SK-N-SH (cell line): ENCODE measurements at regions of chr5 and their contacts with region 1.

Region 1: DNA sequence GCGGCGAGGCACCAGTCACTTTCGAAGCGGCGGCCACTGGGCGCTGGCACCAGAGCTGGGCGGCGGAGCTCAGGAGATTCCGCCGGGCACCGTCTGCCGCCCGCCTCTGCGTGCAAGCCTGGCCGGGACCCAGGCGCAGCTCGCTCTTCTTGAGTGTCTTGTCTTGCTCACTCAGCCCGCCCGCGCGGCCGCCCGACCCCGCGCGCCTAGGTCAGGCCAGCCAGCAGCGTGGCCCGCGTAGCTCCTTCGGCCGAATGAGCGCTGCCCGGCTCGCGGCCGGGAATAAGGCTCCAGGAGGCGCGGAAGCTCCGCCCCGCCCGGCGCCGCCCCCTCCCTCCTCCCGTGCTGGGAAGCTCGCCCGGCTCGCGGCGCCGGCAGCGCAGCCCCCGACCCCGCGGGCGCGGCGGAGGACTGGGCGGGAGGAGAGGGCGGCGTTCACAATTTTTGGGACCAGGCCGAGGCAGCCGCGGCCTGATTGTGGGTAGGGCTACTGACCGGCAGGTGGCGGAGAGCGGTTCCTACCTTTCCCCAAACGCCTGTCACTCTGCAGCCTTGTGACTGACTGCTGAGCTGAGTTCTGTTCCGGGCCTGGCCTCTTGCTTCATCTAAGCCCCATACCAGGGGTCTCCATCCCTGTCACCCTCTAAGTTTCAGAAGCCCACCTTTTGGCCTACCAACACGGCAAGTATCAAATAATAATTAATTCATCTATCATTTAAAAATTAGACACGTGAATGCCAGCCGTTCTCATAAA is at the start of gene HBEGF:
- DNase-seq: peak; percentile 96
- H3K4me3 ChIP-seq: peak within 1 kb of the TSS; percentile 72 to 86
- H3K27ac ChIP-seq: peak within 1 kb of the TSS; percentile 55 to 75; a peak in 3 of 4 replicates
- H3K4me1 ChIP-seq: peaks cover 12 to 32% of the 10 kb centered on the region in 2 experiments
- H3K27me3 ChIP-seq: no peaks in the 10 kb centered on the region
- CTCF ChIP-seq: peak; percentile 43
- EP300 ChIP-seq: no peak
- RAD21 ChIP-seq: no peak
- polyA plus RNA-seq, gene HBEGF: 56.2 and 59.8 TPM in 2 replicates

Region 2: GRCh38 chr5:139848508-139849100 is 497.9 kb before region 1 on chr5:
- CTCF ChIA-PET with region 1: no interaction called
- POLR2A ChIA-PET with region 1: no interaction called
- DNase-seq: no peak
- H3K4me3 ChIP-seq: peak overlapping the region in 1 of 2 experiments; percentile 45; a peak in 2 of 4 replicates
- H3K27ac ChIP-seq: no peak overlapping the region
- H3K4me1 ChIP-seq: peaks cover 0 to 5% of the 10 kb centered on the region in 2 experiments; a peak in 1 of 4 replicates
- H3K27me3 ChIP-seq: no peaks in the 10 kb centered on the region
- CTCF ChIP-seq: no peak
- EP300 ChIP-seq: no peak
- RAD21 ChIP-seq: no peak

Region 3: DNA sequence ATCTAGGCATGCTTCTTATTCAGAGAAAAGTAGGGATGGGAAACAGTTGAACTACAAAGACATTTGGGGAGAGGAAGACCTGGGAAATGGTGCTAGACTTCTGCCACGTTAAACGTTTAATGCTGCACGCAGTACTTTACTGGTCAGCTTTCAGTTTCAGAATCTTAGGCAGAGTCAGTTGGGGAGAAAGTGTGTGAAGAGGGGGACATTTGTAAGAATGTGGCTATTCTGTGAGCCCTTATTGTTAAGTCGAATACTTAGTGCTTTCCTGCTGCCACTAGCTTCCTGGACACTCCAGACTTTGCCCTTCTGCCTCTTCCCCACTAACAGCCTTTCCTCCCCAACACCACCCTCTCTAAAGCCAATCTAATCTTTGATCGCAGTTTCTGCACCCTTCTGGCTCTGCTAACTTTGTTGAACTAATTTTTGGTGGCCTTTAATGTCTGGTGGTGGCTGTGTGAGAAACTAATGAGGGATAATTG is 165.5 kb before region 1 on chr5:
- CTCF ChIA-PET with region 1: interaction called, 12 read pairs
- POLR2A ChIA-PET with region 1: no interaction called
- DNase-seq: peak; percentile 39
- H3K4me3 ChIP-seq: no peak overlapping the region
- H3K27ac ChIP-seq: peak overlapping the region in 1 of 2 experiments; percentile 87; a peak in 2 of 4 replicates
- H3K4me1 ChIP-seq: peaks cover 11 to 36% of the 10 kb centered on the region in 2 experiments; a peak in 3 of 4 replicates
- H3K27me3 ChIP-seq: no peaks in the 10 kb centered on the region
- CTCF ChIP-seq: no peak
- EP300 ChIP-seq: peak in 1 of 2 experiments; percentile 92; a peak in 2 of 4 replicates
- RAD21 ChIP-seq: no peak

Region 4: GRCh38 chr5:140235791-140236551 is 110.6 kb before region 1 on chr5:
- CTCF ChIA-PET with region 1: interaction called, 418 read pairs
- POLR2A ChIA-PET with region 1: interaction called, 13 read pairs
- DNase-seq: no peak
- H3K4me3 ChIP-seq: no peak overlapping the region
- H3K27ac ChIP-seq: no peak overlapping the region
- H3K4me1 ChIP-seq: peaks cover 5 to 8% of the 10 kb centered on the region in 2 experiments; a peak in 3 of 4 replicates
- H3K27me3 ChIP-seq: no peaks in the 10 kb centered on the region
- CTCF ChIP-seq: no peak
- EP300 ChIP-seq: no peak
- RAD21 ChIP-seq: no peak

Region 5: GRCh38 chr5:140251527-140251973 is 95.0 kb before region 1 on chr5:
- CTCF ChIA-PET with region 1: interaction called, 418 read pairs
- POLR2A ChIA-PET with region 1: interaction called, 8 read pairs
- DNase-seq: no peak
- H3K4me3 ChIP-seq: no peak overlapping the region
- H3K27ac ChIP-seq: peak overlapping the region in 1 of 2 experiments; percentile 96; a peak in 2 of 4 replicates
- H3K4me1 ChIP-seq: peaks cover 6 to 18% of the 10 kb centered on the region in 2 experiments
- H3K27me3 ChIP-seq: no peaks in the 10 kb centered on the region
- CTCF ChIP-seq: no peak
- EP300 ChIP-seq: 0 out of 4 replicates have a peak, but pooled peaks of 1 of the 2 experiments have one; percentile 73
- RAD21 ChIP-seq: no peak

Region 6: DNA sequence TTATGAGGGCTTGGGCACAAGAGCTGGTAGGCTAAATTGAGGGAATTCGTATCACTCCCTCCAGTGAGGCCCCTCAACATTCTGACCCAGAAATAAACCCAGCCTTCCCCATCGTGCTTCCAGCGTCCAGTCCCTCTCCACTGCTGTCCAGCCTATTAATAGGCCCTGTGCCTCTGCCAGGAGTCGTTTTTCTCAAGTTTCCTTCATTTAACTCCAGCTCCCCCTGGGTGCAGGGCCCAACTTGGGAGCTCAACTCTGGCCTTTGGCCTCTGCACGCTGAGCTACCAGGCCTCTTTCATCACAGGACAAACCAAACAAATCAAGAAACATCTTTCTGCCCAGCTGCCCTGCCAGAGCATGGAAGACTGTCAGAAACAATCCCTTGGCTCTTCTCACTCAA is 10.1 kb before region 1 on chr5:
- CTCF ChIA-PET with region 1: interaction called, 22 read pairs
- POLR2A ChIA-PET with region 1: no interaction called
- DNase-seq: no peak
- H3K4me3 ChIP-seq: no peak overlapping the region
- H3K27ac ChIP-seq: no peak overlapping the region
- H3K4me1 ChIP-seq: 0 out of 4 replicates have a peak, but pooled peaks cover 0 to 2% of the 10 kb centered on the region in 2 experiments
- H3K27me3 ChIP-seq: no peaks in the 10 kb centered on the region
- CTCF ChIP-seq: no peak
- EP300 ChIP-seq: no peak
- RAD21 ChIP-seq: no peak

Region 7: GRCh38 chr5:140357726-140358093 is 11.2 kb after region 1 on chr5:
- CTCF ChIA-PET with region 1: interaction called, 23 read pairs
- POLR2A ChIA-PET with region 1: interaction called, 3 read pairs
- DNase-seq: peak; percentile 92
- H3K4me3 ChIP-seq: peak overlapping the region in 1 of 2 experiments; percentile 9; a peak in 2 of 4 replicates
- H3K27ac ChIP-seq: no peak overlapping the region
- H3K4me1 ChIP-seq: peaks cover 0 to 4% of the 10 kb centered on the region in 2 experiments; a peak in 1 of 4 replicates
- H3K27me3 ChIP-seq: no peaks in the 10 kb centered on the region
- CTCF ChIP-seq: peak; percentile 91
- EP300 ChIP-seq: no peak
- RAD21 ChIP-seq: peak; percentile 77

Region 8: DNA sequence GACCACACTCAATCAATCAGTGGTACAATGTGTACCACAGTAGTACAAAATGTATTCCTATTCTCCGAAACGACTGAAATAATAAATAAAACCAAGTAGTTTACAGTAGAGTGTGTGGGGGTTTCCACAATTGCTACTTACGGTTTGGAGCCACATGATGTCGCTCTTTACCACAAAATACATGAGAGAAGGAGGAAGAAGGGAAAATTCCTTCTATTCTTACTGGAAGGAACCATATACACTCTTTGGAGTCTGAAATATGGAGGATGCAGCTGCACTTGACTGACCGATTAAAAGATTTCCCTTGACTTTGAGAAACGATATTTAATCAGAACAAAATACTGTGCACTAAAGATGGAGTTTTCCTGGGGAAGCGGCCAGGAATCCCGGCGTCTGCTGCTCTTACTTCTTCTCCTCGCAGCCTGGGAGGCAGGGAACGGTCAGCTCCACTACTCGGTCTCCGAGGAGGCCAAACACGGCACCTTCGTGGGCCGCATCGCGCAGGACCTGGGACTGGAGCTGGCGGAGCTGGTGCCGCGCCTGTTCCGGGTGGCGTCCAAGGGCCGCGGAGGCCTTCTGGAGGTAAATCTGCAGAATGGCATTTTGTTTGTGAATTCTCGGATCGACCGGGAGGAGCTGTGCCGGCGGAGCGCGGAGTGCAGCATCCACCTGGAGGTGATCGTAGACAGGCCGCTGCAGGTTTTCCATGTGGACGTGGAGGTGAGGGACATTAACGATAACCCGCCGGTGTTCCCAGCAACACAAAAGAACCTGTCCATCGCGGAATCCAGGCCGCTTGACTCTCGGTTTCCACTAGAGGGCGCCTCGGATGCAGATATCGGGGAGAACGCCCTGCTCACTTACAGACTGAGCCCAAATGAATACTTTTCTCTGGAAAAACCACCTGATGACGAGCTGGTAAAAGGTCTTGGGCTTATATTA is 460.6 kb after region 1 on chr5 and contains the start of gene PCDHA4:
- CTCF ChIA-PET with region 1: no interaction called
- POLR2A ChIA-PET with region 1: no interaction called
- DNase-seq: peak; percentile 65
- H3K4me3 ChIP-seq: peak within 1 kb of the TSS; percentile 63
- H3K27ac ChIP-seq: peak within 1 kb of the TSS in 1 of 2 experiments; percentile 77; a peak in 2 of 4 replicates
- H3K4me1 ChIP-seq: no peaks in the 10 kb centered on the region; a peak in 2 of 4 replicates
- H3K27me3 ChIP-seq: no peaks in the 10 kb centered on the region
- CTCF ChIP-seq: peak; percentile 63
- EP300 ChIP-seq: no peak
- RAD21 ChIP-seq: peak; percentile 69
- polyA plus RNA-seq, gene PCDHA4: 1.2 and 1.4 TPM in 2 replicates